Mammary epithelial cell (primary cell): ENCODE measurements at regions of chr3 and their contacts with region 1.

Region 1: DNA sequence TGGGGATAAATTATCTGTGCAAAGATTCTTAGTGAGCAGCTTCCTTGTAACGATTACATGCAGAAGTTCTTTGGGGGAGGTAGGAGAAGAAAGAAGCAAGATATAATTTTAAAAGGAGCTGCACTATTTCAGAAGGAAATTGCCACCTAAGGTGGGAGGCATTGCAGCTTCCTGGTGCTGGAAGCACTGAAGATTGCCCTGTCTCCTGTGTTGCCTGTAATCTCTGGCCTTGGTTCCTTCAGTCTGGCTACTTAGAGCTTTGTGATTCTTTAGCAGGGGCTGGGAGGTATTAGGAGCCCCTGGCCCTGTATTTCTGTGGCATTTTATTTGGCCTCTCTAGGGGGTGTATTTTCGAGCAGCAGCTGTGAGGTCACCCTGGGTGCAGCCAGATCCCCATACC is 35.5 kb downstream of the CACNA2D3 start:
- DNase-seq: no peak
- H3K4me3 ChIP-seq: no peak overlapping the region
- H3K27ac ChIP-seq: no peak overlapping the region
- H3K4me1 ChIP-seq: no peaks in the 10 kb centered on the region
- H3K27me3 ChIP-seq: no peaks in the 10 kb centered on the region
- CTCF ChIP-seq: no peak

Region 2: DNA sequence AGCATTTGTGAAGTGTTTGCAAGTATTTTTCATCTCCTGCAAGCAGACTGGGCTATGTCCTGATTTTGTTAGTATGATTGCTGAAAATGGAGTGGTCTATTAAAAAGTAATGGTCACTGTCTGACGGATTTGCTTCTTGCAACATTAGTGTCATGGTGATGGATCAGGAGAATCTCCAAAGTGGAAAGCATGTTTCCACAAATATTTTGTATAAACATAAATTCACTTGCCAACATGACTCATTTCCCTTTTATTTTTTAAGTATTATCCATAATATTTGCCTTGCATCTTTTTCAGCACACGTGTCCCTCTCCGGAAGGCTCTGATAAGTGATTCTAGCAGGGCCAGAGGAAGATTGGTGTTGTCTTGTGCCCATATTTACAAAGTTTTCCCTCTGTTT is 62.9 kb before region 1 on chr3:
- CTCF ChIA-PET with region 1: no interaction called
- dilution Hi-C with region 1: loop called (anchors 5 kb)
- in situ Hi-C with region 1: no loop called
- intact Hi-C with region 1: no loop called
- DNase-seq: no peak
- H3K4me3 ChIP-seq: no peak overlapping the region
- H3K27ac ChIP-seq: no peak overlapping the region
- H3K4me1 ChIP-seq: no peaks in the 10 kb centered on the region
- H3K27me3 ChIP-seq: no peaks in the 10 kb centered on the region
- CTCF ChIP-seq: no peak